HepG2 (cell line): ENCODE measurements at regions of chr7 and their contacts with region 1.

Region 1: DNA sequence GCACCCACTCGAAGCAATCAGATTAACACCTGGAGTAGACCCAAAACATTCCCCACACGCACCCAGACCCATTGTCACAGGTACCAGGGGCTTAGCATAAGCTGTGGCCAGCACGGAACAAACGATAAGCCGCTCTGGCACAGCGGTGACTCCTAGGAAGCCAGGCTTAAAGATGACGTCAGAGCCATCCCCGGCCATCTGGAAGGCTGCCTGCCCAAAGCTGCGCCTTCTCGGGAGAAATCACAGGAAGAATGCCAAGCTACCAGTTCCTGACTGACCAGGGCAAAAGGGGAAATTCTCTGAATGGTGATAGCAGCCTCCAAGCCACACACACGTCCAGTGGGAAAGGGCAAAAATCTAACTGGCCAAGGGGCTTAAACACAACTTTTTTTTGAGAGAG is 13.0 kb upstream of the WIPI2 start:
- DNase-seq: no peak
- ATAC-seq: no peak
- H3K4me3 ChIP-seq: no peak overlapping the region
- H3K27ac ChIP-seq: no peak overlapping the region
- H3K4me1 ChIP-seq: peaks cover 45% of the 10 kb centered on the region
- H3K27me3 ChIP-seq: no peaks in the 10 kb centered on the region
- CTCF ChIP-seq: no peak
- EP300 ChIP-seq: no peak
- POLR2A ChIP-seq: no peak
- RAD21 ChIP-seq: no peak

Region 2: DNA sequence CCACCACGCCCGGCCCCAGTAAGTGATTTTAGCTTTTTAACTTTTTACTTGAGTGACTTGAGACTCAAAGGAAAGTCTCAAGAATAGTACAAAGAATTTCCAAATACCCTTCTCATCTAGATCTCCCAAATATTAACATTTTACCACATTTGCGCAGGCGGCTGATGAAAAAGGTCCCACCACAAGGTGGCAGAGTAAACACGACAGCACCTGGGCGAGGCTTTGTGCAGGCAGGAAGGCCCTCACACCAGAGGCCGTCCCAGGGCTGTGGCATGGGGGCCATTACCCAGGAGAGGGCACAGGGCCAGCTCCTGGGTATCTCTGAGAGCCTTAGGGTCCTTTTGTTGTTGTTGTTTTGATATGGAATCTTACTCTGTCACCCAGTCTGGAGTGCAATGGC is 37.1 kb before region 1 on chr7:
- CTCF ChIA-PET with region 1: interaction called, 17 read pairs
- POLR2A ChIA-PET with region 1: no interaction called
- in situ Hi-C with region 1: no loop called
- intact Hi-C with region 1: loop called (anchors 1 kb)
- DNase-seq: peak; percentile 32
- ATAC-seq: peak; percentile 76
- H3K4me3 ChIP-seq: no peak overlapping the region
- H3K27ac ChIP-seq: no peak overlapping the region
- H3K4me1 ChIP-seq: no peaks in the 10 kb centered on the region
- H3K27me3 ChIP-seq: 0 out of 5 replicates have a peak, but pooled peaks cover 0 to 5% of the 10 kb centered on the region in 2 experiments
- CTCF ChIP-seq: peak; percentile 74
- EP300 ChIP-seq: no peak
- POLR2A ChIP-seq: no peak
- RAD21 ChIP-seq: 0 out of 2 replicates have a peak, but pooled peaks have one; percentile 21